Cardiac septum (tissue), 1 donor: ENCODE measurements at regions of chr20 and their contacts with region 1.

Region 1: GRCh38 chr20:13105864-13106457 is 97.2 kb downstream of the SPTLC3 start:
- DNase-seq: no peak

Region 2: GRCh38 chr20:11676630-11677284 is 1429.2 kb before region 1 on chr20:
- intact Hi-C with region 1: loop called (anchors 5 kb)
- DNase-seq: no peak

Region 3: DNA sequence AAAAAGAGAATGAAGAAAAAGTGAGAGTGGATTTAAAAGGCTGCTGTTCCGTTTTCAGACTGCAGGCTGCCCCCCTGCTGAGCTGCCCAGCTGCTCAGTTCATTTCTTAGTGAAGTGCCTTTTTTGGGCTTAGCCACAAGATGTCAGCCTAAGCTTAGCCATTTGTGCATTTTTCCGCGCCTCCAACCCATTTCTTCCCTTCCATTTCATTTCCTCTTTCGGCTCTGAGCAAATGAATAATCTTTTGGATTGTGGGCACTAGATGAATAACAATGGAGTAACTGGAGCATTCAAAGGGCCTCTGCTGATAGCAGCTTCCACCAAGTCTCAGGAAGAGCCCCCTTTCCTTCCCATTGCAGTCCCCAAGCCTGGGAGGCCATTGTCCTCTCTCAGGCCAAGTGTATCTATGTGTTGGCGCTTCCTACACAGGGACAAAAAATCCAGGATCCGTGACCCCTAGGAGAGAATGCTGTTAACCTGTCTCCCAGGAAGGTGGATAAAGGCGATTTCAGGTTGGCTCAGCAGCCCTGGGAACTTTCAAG is 180.7 kb before region 1 on chr20:
- intact Hi-C with region 1: loop called (anchors 5 kb)
- DNase-seq: no peak

Region 4: DNA sequence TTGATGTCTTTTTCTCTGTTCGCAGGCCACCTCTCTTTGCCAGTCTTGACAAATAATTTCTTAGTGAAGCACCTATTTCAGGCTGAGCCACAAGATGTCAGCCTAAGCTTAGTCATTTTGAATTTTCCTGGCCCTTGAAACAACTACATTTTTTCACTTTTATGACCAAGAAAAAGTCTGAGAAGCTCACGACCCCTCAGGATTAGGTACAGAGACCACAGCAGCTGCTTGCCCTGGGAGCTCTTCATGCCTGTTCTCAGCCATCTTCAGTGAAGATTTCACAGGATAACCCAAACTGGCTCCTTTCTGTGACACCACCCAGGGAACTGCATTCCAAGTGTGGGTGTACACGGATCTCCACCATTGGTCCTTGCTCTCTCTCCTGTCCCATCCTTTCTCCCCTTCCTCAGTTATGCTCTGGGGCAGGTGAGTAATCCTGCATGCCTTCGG is 135.6 kb before region 1 on chr20:
- intact Hi-C with region 1: loop called (anchors 2 kb)
- DNase-seq: no peak